Activated CD8-positive, alpha-beta T cell treated with anti-CD3 and anti-CD28 coated beads, Interleukin-2, amount 10 ng/mL, durations not matched to agents 7 days and 5 days (primary cell): ENCODE measurements at regions of chr2 and their contacts with region 1.

Region 1: GRCh38 chr2:201071479-201072200 is at the starts of genes HYCC2 and NDUFB3:
- DNase-seq: peak; percentile 96
- ATAC-seq: peak; percentile 97
- H3K4me3 Mint-ChIP-seq: peak within 1 kb of the TSS; percentile 89
- H3K27ac Mint-ChIP-seq: peak within 1 kb of the TSS; percentile 88
- H3K4me1 Mint-ChIP-seq: peaks cover 46% of the 10 kb centered on the region
- H3K27me3 Mint-ChIP-seq: no peaks in the 10 kb centered on the region
- total RNA-seq, gene HYCC2: 35.9 to 40.2 TPM
- total RNA-seq, gene NDUFB3: 167 to 173 TPM

Region 2: GRCh38 chr2:200670313-200670712 is 401.3 kb before region 1 on chr2:
- CTCF ChIA-PET with region 1: no interaction called
- POLR2A ChIA-PET with region 1: no interaction called
- DNase-seq: peak; percentile 4
- ATAC-seq: no peak
- H3K4me3 Mint-ChIP-seq: no peak overlapping the region
- H3K27ac Mint-ChIP-seq: no peak overlapping the region
- H3K4me1 Mint-ChIP-seq: peaks cover 13% of the 10 kb centered on the region
- H3K27me3 Mint-ChIP-seq: peaks cover 6% of the 10 kb centered on the region

Region 3: DNA sequence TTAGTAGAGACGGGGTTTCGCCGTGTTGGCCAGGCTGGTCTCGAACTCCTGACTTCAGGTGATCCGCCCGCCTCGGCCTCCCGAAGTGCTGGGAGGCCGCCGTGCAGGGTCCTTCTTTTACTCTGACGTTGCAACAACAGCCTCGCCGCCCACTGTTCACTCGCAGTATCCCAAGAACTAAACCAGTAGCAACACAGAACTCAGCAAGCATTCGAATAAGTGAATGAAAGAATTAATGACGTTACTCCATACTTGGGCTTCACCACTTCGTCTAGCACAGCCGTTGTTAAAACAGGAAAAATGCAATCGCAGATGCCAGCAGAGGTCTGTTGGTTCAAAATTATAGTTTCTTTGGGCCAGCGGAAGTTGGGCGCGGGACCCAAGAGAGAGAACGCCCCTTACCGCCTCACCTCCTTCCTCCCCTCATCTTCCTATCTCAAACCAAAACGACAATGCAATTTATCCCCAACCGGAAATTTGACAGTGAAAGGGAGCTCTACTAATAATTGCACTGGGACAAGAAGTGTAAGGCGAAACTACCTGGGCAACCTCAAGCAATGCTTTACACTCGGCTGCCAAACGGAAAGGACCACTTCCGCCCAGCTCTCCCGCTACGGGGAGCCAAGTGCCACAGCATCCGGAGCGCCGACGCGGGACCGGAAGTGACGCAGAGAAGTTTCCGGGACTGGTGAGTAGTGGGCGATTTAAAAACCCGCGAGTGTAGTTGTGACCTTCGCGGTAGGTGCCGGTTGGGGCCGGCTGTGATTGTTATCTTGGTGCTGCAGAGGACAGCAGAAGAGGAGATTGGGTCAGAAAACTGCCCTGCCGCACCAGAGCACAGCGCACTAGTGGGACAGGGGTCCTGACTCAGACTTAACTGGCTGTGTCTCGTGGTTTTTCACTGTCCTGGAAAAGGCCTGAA is 182.7 kb before region 1 on chr2 and contains the starts of genes NIF3L1 and PPIL3:
- CTCF ChIA-PET with region 1: interaction called, 11 read pairs
- POLR2A ChIA-PET with region 1: interaction called, 5 read pairs
- DNase-seq: peak; percentile 99
- ATAC-seq: peak; percentile 86
- H3K4me3 Mint-ChIP-seq: peak within 1 kb of the TSS; percentile 90
- H3K27ac Mint-ChIP-seq: peak within 1 kb of the TSS; percentile 98
- H3K4me1 Mint-ChIP-seq: peaks cover 49% of the 10 kb centered on the region
- H3K27me3 Mint-ChIP-seq: no peaks in the 10 kb centered on the region
- total RNA-seq, gene NIF3L1: 37.0 to 39.0 TPM
- total RNA-seq, gene PPIL3: 81.6 to 82.9 TPM

Region 4: GRCh38 chr2:200913654-200914053 is 158.0 kb before region 1 on chr2:
- CTCF ChIA-PET with region 1: interaction called, 22 read pairs
- POLR2A ChIA-PET with region 1: no interaction called
- DNase-seq: no peak
- ATAC-seq: no peak
- H3K4me3 Mint-ChIP-seq: no peak overlapping the region
- H3K27ac Mint-ChIP-seq: no peak overlapping the region
- H3K4me1 Mint-ChIP-seq: no peaks in the 10 kb centered on the region
- H3K27me3 Mint-ChIP-seq: no peaks in the 10 kb centered on the region

Region 5: GRCh38 chr2:201049455-201049854 is 22.2 kb before region 1 on chr2:
- CTCF ChIA-PET with region 1: interaction called, 11 read pairs
- POLR2A ChIA-PET with region 1: no interaction called
- DNase-seq: no peak
- ATAC-seq: no peak
- H3K4me3 Mint-ChIP-seq: no peak overlapping the region
- H3K27ac Mint-ChIP-seq: no peak overlapping the region
- H3K4me1 Mint-ChIP-seq: peaks cover 9% of the 10 kb centered on the region
- H3K27me3 Mint-ChIP-seq: no peaks in the 10 kb centered on the region

Region 6: DNA sequence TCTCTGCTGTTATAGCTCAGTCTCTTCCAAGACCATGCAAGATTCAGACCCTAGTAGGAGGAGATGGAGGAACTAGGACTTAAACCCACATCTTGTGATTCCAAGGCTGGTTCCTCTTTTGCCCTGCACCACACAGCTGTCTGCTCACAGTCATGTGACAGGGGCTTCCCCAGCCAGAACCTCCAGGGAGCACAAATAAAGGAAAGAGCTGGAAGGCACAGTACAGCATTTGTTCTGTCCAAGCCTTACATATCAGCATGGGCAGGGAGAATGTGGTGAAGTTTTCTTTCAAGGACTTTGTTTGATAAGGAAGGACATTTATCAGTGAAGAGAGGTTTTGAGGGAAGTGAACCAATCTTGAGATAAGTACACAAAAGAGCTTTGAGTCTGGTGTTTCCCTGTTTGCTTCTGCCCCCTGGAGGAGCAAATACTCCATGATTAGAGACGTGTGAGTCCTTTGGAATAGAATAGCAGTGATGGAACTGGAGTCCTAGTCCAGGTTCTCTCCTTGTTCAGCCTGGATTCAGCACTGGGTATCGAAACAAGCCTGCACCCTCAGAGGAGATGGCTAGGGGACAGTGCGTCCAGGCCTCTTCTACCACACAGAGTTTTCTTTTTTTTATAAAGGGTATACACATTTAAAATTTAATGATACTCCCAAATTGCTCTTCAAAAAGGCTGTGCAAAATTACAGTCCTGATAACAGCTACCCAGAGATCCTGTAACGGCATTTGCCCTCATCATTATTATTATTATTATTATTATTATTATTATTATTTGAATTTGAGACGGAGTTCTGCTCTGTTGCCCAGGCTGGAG is 86.7 kb after region 1 on chr2:
- CTCF ChIA-PET with region 1: interaction called, 25 read pairs
- POLR2A ChIA-PET with region 1: interaction called, 4 read pairs
- DNase-seq: peak; percentile 80
- ATAC-seq: peak; percentile 90
- H3K4me3 Mint-ChIP-seq: no peak overlapping the region
- H3K27ac Mint-ChIP-seq: peak overlapping the region; percentile 76
- H3K4me1 Mint-ChIP-seq: peaks cover 11% of the 10 kb centered on the region
- H3K27me3 Mint-ChIP-seq: no peaks in the 10 kb centered on the region